CD14-positive monocyte (primary cell): ENCODE measurements at regions of chr2 and their contacts with region 1.

Region 1: DNA sequence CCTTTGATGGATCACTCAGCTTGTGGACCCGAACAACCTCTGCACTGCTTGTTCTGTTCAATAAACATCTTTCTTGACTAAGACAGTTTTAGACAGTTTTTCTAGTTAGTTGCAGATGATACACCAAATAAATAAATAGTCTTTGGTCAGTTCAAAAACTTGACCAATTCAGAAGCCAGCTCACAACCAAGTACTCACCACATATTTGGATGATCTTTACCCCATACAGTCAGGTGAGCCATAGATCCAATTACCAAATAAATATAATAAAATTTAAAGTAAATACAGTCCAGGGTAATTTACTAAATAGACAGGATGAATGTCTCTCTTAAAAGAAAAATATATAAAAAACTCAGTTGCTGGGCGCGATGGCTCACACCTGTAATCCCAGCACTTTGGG is 18.2 kb downstream of the SCN3A start:
- DNase-seq: no peak
- H3K4me3 ChIP-seq: no peak overlapping the region
- H3K4me3 Mint-ChIP-seq: no peak overlapping the region
- H3K27ac ChIP-seq: no peak overlapping the region
- H3K27ac Mint-ChIP-seq: no peak overlapping the region
- H3K4me1 ChIP-seq: no peaks in the 10 kb centered on the region
- H3K4me1 Mint-ChIP-seq: no peaks in the 10 kb centered on the region
- H3K27me3 ChIP-seq: no peaks in the 10 kb centered on the region
- H3K27me3 Mint-ChIP-seq: peaks cover 0 to 3% (median 0%) of the 10 kb centered on the region in 3 donors
- CTCF ChIP-seq: no peak

Region 2: GRCh38 chr2:165008730-165009315 is 176.8 kb before region 1 on chr2:
- intact Hi-C with region 1: loop called in 1 of 2 experiments (anchors 5 kb)
- DNase-seq: no peak
- H3K4me3 ChIP-seq: no peak overlapping the region
- H3K4me3 Mint-ChIP-seq: no peak overlapping the region
- H3K27ac ChIP-seq: no peak overlapping the region
- H3K27ac Mint-ChIP-seq: no peak overlapping the region
- H3K4me1 ChIP-seq: no peaks in the 10 kb centered on the region
- H3K4me1 Mint-ChIP-seq: peaks cover 5% of the 10 kb centered on the region
- H3K27me3 ChIP-seq: no peaks in the 10 kb centered on the region
- H3K27me3 Mint-ChIP-seq: peaks cover 0 to 4% (median 0%) of the 10 kb centered on the region in 3 donors
- CTCF ChIP-seq: no peak

Region 3: GRCh38 chr2:167005096-167005495 is 1819.5 kb after region 1 on chr2:
- intact Hi-C with region 1: no loop called
- DNase-seq: no peak
- H3K4me3 ChIP-seq: no peak overlapping the region
- H3K4me3 Mint-ChIP-seq: no peak overlapping the region
- H3K27ac ChIP-seq: no peak overlapping the region
- H3K27ac Mint-ChIP-seq: no peak overlapping the region
- H3K4me1 ChIP-seq: no peaks in the 10 kb centered on the region
- H3K4me1 Mint-ChIP-seq: no peaks in the 10 kb centered on the region
- H3K27me3 ChIP-seq: no peaks in the 10 kb centered on the region
- H3K27me3 Mint-ChIP-seq: no peaks in the 10 kb centered on the region
- CTCF ChIP-seq: no peak